ENCODE measurements at regions of chr6 and their contacts with region 1.

Region 1: GRCh38 chr6:14216946-14217684 is 99.5 kb downstream of the CD83 start:
- DNase-seq: no peak
- ATAC-seq: no peak
- H3K4me3 ChIP-seq: no peak overlapping the region
- H3K27ac ChIP-seq: no peak overlapping the region
- H3K4me1 ChIP-seq: no peaks in the 10 kb centered on the region
- H3K27me3 ChIP-seq: no peaks in the 10 kb centered on the region
- CTCF ChIP-seq: no peak
- EP300 ChIP-seq: no peak
- POLR2A ChIP-seq: no peak
- RAD21 ChIP-seq: no peak

Region 2: GRCh38 chr6:14228571-14228970 is 11.5 kb after region 1 on chr6:
- CTCF ChIA-PET with region 1: no interaction called
- POLR2A ChIA-PET with region 1: no interaction called
- RAD21 ChIA-PET with region 1: interaction called, 7 read pairs
- SMC1A ChIA-PET with region 1: interaction called, 14 read pairs
- in situ Hi-C with region 1: no loop called
- intact Hi-C with region 1: no loop called
- DNase-seq: no peak
- ATAC-seq: no peak
- H3K4me3 ChIP-seq: no peak overlapping the region
- H3K27ac ChIP-seq: no peak overlapping the region
- H3K4me1 ChIP-seq: no peaks in the 10 kb centered on the region
- H3K27me3 ChIP-seq: no peaks in the 10 kb centered on the region
- CTCF ChIP-seq: no peak
- EP300 ChIP-seq: no peak
- POLR2A ChIP-seq: no peak
- RAD21 ChIP-seq: no peak

Region 3: DNA sequence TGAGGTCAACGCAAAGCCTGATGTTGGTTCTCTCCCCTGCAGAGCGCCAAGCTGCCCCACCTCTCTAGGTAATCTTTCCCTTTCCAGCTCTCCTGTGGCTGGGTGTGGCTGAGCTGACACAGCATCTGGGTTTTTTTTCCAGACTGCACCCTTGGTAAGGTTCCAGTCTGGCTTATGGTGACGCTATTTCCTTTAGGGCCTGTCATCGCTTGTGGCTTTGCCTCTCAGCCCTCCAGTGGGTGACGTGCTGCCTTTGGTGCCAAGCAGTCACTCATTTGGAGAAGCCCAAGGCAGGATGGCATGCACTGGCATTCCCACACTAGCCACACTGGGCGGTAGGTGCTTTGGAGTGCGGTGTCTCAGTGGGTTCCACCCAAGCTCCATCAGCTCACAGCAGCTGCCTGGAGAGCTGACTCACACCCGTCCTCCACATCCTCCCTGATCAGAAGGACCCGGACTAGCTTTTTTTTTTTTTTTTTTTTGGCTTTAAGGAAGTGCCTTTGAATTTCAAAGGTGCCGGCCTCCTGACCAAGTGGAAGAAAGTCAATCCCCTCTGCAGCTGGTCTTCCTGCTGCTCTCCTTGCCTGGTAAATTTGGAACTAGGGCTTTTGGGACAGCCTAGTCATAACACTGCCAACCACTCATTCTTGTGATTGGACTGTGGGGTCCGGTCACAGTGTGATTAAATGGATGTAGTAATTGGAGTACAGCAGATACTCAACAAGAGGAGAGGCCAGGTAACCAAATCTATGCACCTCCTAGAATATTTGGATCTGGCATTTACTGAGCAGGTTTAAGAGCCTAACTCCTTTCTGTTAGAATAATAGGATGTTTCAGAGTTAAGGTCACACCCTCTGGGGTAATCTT is 54.0 kb after region 1 on chr6:
- CTCF ChIA-PET with region 1: no interaction called
- POLR2A ChIA-PET with region 1: no interaction called
- RAD21 ChIA-PET with region 1: no interaction called
- SMC1A ChIA-PET with region 1: no interaction called
- in situ Hi-C with region 1: no loop called
- intact Hi-C with region 1: no loop called
- DNase-seq: no peak
- ATAC-seq: no peak
- H3K4me3 ChIP-seq: no peak overlapping the region
- H3K27ac ChIP-seq: no peak overlapping the region
- H3K4me1 ChIP-seq: peaks cover 6% of the 10 kb centered on the region
- H3K27me3 ChIP-seq: no peaks in the 10 kb centered on the region
- CTCF ChIP-seq: no peak
- EP300 ChIP-seq: no peak
- POLR2A ChIP-seq: no peak
- RAD21 ChIP-seq: no peak